CD8-positive, alpha-beta T cell (primary cell): ENCODE measurements at regions of chr12 and their contacts with region 1.

Region 1: DNA sequence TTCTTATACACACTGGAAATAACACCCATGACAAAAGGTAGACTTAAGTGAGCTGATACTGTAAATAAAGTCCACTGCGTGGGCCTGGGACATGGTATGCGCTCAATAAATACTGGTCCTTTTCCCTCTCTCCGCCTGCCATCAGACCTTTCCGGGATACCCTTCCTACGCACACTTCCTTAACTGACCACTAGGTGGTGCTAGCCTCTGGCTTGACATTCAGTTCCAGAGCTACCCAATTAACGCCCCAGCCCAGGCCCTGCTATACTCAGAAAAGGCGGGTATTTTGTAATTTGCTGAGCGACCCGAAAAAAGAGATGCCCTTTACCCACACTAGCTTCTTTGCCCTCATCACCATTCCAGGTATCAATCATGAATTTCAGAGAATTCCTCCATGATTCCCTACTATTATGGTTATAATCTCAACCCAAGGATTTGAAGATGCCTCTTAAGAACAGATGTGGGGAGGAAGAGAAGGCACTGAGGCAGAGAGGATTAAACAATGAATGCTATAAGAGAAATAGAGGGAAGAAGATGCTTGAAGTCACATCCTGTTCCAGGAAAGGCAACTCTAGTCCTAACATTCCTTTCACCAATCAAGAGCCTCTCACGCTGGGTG is 3.9 kb upstream of the LRP1 start:
- DNase-seq: peak; percentile 45 to 86 (median 76)
- ATAC-seq: peak; percentile 69
- H3K4me3 ChIP-seq: no peak overlapping the region
- H3K4me3 Mint-ChIP-seq: no peak overlapping the region
- H3K27ac ChIP-seq: no peak overlapping the region
- H3K27ac Mint-ChIP-seq: no peak overlapping the region
- H3K4me1 ChIP-seq: peaks cover 13% of the 10 kb centered on the region
- H3K4me1 Mint-ChIP-seq: peaks cover 12% of the 10 kb centered on the region
- H3K27me3 ChIP-seq: peaks cover 0 to 5% of the 10 kb centered on the region in 2 experiments
- H3K27me3 Mint-ChIP-seq: no peaks in the 10 kb centered on the region
- CTCF ChIP-seq: peak; percentile 91

Region 2: GRCh38 chr12:56759263-56759908 is 365.0 kb before region 1 on chr12:
- CTCF ChIA-PET with region 1: no interaction called
- POLR2A ChIA-PET with region 1: no interaction called
- intact Hi-C with region 1: loop called in 1 of 2 experiments (anchors 5 kb)
- DNase-seq: no peak
- ATAC-seq: no peak
- H3K4me3 ChIP-seq: no peak overlapping the region
- H3K4me3 Mint-ChIP-seq: no peak overlapping the region
- H3K27ac ChIP-seq: no peak overlapping the region
- H3K27ac Mint-ChIP-seq: no peak overlapping the region
- H3K4me1 ChIP-seq: no peaks in the 10 kb centered on the region
- H3K4me1 Mint-ChIP-seq: no peaks in the 10 kb centered on the region
- H3K27me3 ChIP-seq: no peaks in the 10 kb centered on the region
- H3K27me3 Mint-ChIP-seq: peaks cover 5% of the 10 kb centered on the region
- CTCF ChIP-seq: no peak

Region 3: DNA sequence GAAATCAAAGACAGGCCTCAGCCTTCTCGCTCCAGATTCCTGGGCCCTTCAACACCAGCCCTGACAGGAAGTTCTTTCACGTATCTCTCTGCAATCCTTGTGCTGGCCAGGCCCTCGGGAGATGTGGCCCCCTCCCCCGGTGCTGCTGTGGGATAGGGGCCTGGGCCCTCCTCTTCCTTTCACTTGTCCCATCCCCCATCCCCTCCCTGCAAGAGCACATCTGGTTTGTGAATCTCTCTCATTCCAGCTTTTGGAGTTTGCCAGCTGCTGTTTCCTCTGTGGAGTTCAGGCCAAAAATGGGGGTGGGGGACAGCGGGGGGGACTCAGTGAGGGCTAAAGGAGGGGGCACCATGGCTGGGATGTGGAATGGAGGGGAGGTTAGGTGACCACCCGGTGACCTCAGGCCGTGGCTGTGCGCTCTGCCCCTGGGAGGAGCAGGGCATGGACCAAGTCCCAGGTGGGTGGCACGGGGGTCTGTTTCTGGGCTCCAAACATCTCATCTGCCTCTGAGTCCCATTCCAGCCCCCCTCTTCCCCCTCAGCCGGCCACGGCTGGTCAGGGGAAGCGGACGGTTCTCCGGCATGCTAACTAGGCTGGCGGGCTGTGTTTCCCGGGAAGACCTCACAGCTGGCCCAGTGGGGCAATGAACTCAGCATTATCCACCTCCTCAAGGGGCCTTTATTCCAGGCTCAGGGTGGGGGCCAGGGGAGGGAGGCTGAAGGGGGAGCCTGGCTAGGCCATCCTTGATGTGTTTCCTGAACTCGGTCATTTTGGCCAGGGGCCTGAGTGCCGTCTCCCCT is 11.4 kb after region 1 on chr12:
- CTCF ChIA-PET with region 1: interaction called, 14 read pairs
- POLR2A ChIA-PET with region 1: no interaction called
- intact Hi-C with region 1: no loop called
- DNase-seq: no peak
- ATAC-seq: no peak
- H3K4me3 ChIP-seq: no peak overlapping the region
- H3K4me3 Mint-ChIP-seq: no peak overlapping the region
- H3K27ac ChIP-seq: no peak overlapping the region
- H3K27ac Mint-ChIP-seq: no peak overlapping the region
- H3K4me1 ChIP-seq: no peaks in the 10 kb centered on the region
- H3K4me1 Mint-ChIP-seq: no peaks in the 10 kb centered on the region
- H3K27me3 ChIP-seq: no peaks in the 10 kb centered on the region
- H3K27me3 Mint-ChIP-seq: no peaks in the 10 kb centered on the region
- CTCF ChIP-seq: no peak

Region 4: GRCh38 chr12:57146961-57147944 is 22.9 kb after region 1 on chr12 and contains the start of gene LRP1-AS:
- CTCF ChIA-PET with region 1: interaction called, 11 read pairs
- POLR2A ChIA-PET with region 1: no interaction called
- intact Hi-C with region 1: no loop called
- DNase-seq: no peak
- ATAC-seq: no peak
- H3K4me3 ChIP-seq: no peak within 1 kb of the TSS
- H3K4me3 Mint-ChIP-seq: no peak within 1 kb of the TSS
- H3K27ac ChIP-seq: no peak within 1 kb of the TSS
- H3K27ac Mint-ChIP-seq: no peak within 1 kb of the TSS
- H3K4me1 ChIP-seq: peaks cover 13% of the 10 kb centered on the region
- H3K4me1 Mint-ChIP-seq: peaks cover 14% of the 10 kb centered on the region
- H3K27me3 ChIP-seq: no peaks in the 10 kb centered on the region
- H3K27me3 Mint-ChIP-seq: no peaks in the 10 kb centered on the region
- CTCF ChIP-seq: no peak
- total RNA-seq, gene LRP1-AS: not detected

Region 5: DNA sequence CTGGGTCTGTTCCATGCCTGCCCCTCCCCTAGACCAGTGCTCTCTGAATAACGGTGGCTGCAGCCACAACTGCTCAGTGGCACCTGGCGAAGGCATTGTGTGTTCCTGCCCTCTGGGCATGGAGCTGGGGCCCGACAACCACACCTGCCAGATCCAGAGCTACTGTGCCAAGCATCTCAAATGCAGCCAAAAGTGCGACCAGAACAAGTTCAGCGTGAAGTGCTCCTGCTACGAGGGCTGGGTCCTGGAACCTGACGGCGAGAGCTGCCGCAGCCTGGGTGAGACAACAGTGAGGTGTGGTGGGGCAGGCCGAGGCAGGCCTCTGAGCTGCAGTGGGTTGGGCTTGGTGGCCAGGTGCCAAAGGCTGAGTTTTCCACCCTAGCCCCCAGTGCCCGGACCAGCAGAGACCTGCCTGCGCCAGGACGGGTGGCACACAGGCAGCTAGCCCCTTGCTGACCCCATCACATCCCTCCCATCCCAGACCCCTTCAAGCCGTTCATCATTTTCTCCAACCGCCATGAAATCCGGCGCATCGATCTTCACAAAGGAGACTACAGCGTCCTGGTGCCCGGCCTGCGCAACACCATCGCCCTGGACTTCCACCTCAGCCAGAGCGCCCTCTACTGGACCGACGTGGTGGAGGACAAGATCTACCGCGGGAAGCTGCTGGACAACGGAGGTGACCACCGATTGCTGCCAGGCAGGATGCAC is 51.2 kb after region 1 on chr12:
- CTCF ChIA-PET with region 1: interaction called, 224 read pairs
- POLR2A ChIA-PET with region 1: no interaction called
- intact Hi-C with region 1: loop called (anchors 1 kb)
- DNase-seq: peak in 8 of 9 experiments; percentile 5 to 52 (median 40)
- ATAC-seq: no peak
- H3K4me3 ChIP-seq: no peak overlapping the region
- H3K4me3 Mint-ChIP-seq: no peak overlapping the region
- H3K27ac ChIP-seq: no peak overlapping the region
- H3K27ac Mint-ChIP-seq: no peak overlapping the region
- H3K4me1 ChIP-seq: no peaks in the 10 kb centered on the region
- H3K4me1 Mint-ChIP-seq: no peaks in the 10 kb centered on the region
- H3K27me3 ChIP-seq: no peaks in the 10 kb centered on the region
- H3K27me3 Mint-ChIP-seq: no peaks in the 10 kb centered on the region
- CTCF ChIP-seq: peak; percentile 15

Region 6: DNA sequence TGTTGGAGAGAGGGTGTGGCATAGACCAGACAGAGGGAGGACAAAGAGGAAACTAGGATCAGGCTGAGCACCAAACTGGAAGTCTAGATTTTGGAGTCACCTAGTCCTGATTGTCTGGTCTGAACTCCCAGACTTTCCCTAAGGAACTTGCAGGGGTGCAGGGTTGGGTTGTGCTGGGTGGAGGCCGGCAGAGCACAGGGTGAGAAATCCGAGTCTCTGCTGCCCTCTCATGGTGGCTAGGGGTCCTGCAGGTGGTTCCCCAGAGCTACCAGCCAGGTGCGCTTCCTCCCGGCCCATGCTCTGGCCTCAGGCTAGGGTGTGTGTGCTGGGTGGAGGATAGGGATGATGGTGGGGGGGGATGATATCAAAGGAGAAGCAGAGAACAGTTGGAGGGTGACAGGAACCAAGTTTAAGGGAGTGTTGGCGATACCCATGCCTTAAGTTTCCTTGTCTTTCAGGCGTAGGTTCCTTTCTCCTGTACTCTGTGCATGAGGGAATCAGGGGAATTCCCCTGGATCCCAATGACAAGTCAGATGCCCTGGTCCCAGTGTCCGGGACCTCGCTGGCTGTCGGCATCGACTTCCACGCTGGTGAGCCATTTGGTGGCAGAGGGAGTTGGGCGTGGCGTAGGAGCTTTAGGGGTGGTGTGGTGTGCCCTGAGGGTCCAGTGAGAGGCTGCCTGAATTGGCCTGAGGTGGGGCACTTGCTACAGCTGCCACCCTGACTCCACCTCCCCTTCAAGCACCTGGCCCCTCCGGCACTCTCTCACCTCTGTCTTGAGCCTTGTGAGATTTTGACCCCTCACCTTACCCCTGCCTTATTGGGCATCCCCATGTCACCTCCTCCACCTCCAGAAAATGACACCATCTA is 58.8 kb after region 1 on chr12:
- CTCF ChIA-PET with region 1: interaction called, 224 read pairs
- POLR2A ChIA-PET with region 1: no interaction called
- intact Hi-C with region 1: loop called (anchors 1 kb)
- DNase-seq: peak; percentile 63 to 88 (median 82)
- ATAC-seq: peak; percentile 100
- H3K4me3 ChIP-seq: no peak overlapping the region
- H3K4me3 Mint-ChIP-seq: no peak overlapping the region
- H3K27ac ChIP-seq: no peak overlapping the region
- H3K27ac Mint-ChIP-seq: no peak overlapping the region
- H3K4me1 ChIP-seq: peaks cover 5% of the 10 kb centered on the region
- H3K4me1 Mint-ChIP-seq: peaks cover 2% of the 10 kb centered on the region
- H3K27me3 ChIP-seq: no peaks in the 10 kb centered on the region
- H3K27me3 Mint-ChIP-seq: no peaks in the 10 kb centered on the region
- CTCF ChIP-seq: peak; percentile 83

Region 7: DNA sequence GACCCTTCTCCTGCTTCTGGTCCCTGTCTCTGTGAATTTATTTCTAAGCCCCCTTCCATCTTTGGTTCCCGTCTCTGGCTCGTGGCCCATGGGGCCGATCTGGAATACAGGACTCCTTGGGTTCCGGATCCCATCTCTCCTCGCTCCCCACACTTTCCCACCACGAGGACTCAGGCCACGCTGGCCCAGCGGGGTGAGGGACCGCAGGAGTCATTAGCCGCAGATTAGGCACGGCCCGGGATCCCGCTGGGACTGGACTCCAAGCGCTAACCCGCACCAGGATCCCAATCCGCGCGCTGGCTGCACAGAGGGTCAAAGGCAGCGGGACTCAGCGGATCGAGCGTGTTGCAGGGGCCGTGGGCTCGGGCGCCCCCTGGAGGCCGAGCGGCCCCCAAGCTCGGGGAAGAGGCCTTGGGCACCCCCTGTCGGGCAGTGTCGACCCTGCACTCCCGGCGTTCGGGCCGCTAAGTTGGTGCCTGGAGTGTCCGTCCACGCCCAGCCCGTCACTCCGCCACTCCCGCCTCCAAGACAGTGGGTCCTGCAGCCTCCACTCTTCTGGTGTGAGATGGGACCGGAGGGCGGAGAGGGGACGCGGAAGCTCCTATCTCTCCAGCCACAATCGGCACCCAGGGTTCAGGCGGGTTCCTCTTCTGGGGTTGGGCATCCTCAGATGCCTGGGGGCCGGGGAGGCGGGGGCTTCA is 114.6 kb after region 1 on chr12:
- CTCF ChIA-PET with region 1: interaction called, 7 read pairs
- POLR2A ChIA-PET with region 1: interaction called, 3 read pairs
- intact Hi-C with region 1: loop called (anchors 1 kb)
- DNase-seq: peak; percentile 73 to 92 (median 86)
- ATAC-seq: peak; percentile 65
- H3K4me3 ChIP-seq: peak overlapping the region; percentile 64 to 78
- H3K4me3 Mint-ChIP-seq: peak overlapping the region; percentile 93
- H3K27ac ChIP-seq: no peak overlapping the region
- H3K27ac Mint-ChIP-seq: no peak overlapping the region
- H3K4me1 ChIP-seq: peaks cover 79% of the 10 kb centered on the region
- H3K4me1 Mint-ChIP-seq: peaks cover 64% of the 10 kb centered on the region
- H3K27me3 ChIP-seq: peaks cover 48 to 72% of the 10 kb centered on the region in 2 experiments
- H3K27me3 Mint-ChIP-seq: peaks cover 56% of the 10 kb centered on the region
- CTCF ChIP-seq: peak; percentile 100